CD8-positive, alpha-beta memory T cell (primary cell): ENCODE measurements at regions of chr17 and their contacts with region 1.

Region 1: GRCh38 chr17:49191917-49192741 is 18.2 kb downstream of the GNGT2 start:
- DNase-seq: peak; percentile 79 to 95 (median 89)
- H3K4me3 ChIP-seq: peak overlapping the region; percentile 94
- H3K4me3 Mint-ChIP-seq: peak overlapping the region; percentile 84 to 97 (median 91)
- H3K27ac ChIP-seq: peak overlapping the region; percentile 78
- H3K27ac Mint-ChIP-seq: peak overlapping the region; percentile 88 to 99 (median 96)
- H3K4me1 ChIP-seq: peaks cover 4% of the 10 kb centered on the region
- H3K4me1 Mint-ChIP-seq: peaks cover 23 to 43% (median 40%) of the 10 kb centered on the region in 3 donors
- H3K27me3 ChIP-seq: no peaks in the 10 kb centered on the region
- H3K27me3 Mint-ChIP-seq: peaks cover 0 to 12% of the 10 kb centered on the region in 2 donors

Region 2: GRCh38 chr17:49076573-49077384 is 115.3 kb before region 1 on chr17:
- CTCF ChIA-PET with region 1: no interaction called
- POLR2A ChIA-PET with region 1: no interaction called
- DNase-seq: no peak
- H3K4me3 ChIP-seq: no peak overlapping the region
- H3K4me3 Mint-ChIP-seq: no peak overlapping the region
- H3K27ac ChIP-seq: no peak overlapping the region
- H3K27ac Mint-ChIP-seq: no peak overlapping the region
- H3K4me1 ChIP-seq: no peaks in the 10 kb centered on the region
- H3K4me1 Mint-ChIP-seq: no peaks in the 10 kb centered on the region
- H3K27me3 ChIP-seq: no peaks in the 10 kb centered on the region
- H3K27me3 Mint-ChIP-seq: peaks cover 15 to 45% of the 10 kb centered on the region in 2 donors

Region 3: GRCh38 chr17:49210158-49211029 is 18.3 kb after region 1 on chr17 and contains the starts of genes ABI3 and GNGT2:
- CTCF ChIA-PET with region 1: interaction called, 133 read pairs
- POLR2A ChIA-PET with region 1: interaction called, 22 read pairs
- DNase-seq: peak; percentile 47 to 78 (median 70)
- H3K4me3 ChIP-seq: peak within 1 kb of the TSS; percentile 69
- H3K4me3 Mint-ChIP-seq: peak within 1 kb of the TSS; percentile 81 to 99 (median 98)
- H3K27ac ChIP-seq: peak within 1 kb of the TSS; percentile 57
- H3K27ac Mint-ChIP-seq: peak within 1 kb of the TSS; percentile 88 to 97 (median 94)
- H3K4me1 ChIP-seq: peaks cover 71% of the 10 kb centered on the region
- H3K4me1 Mint-ChIP-seq: peaks cover 67 to 79% (median 77%) of the 10 kb centered on the region in 3 donors
- H3K27me3 ChIP-seq: no peaks in the 10 kb centered on the region
- H3K27me3 Mint-ChIP-seq: no peaks in the 10 kb centered on the region
- total RNA-seq, gene ABI3: 46.4 to 48.5 TPM
- total RNA-seq, gene GNGT2: 24.0 to 26.5 TPM

Region 4: GRCh38 chr17:49217651-49218413 is 25.7 kb after region 1 on chr17:
- CTCF ChIA-PET with region 1: interaction called, 133 read pairs
- POLR2A ChIA-PET with region 1: interaction called, 35 read pairs
- DNase-seq: peak; percentile 62 to 92 (median 90)
- H3K4me3 ChIP-seq: peak overlapping the region; percentile 49
- H3K4me3 Mint-ChIP-seq: peak overlapping the region; percentile 67 to 88 (median 83)
- H3K27ac ChIP-seq: peak overlapping the region; percentile 59
- H3K27ac Mint-ChIP-seq: peak overlapping the region; percentile 94 to 100 (median 98)
- H3K4me1 ChIP-seq: peaks cover 77% of the 10 kb centered on the region
- H3K4me1 Mint-ChIP-seq: peaks cover 66 to 85% (median 69%) of the 10 kb centered on the region in 3 donors
- H3K27me3 ChIP-seq: no peaks in the 10 kb centered on the region
- H3K27me3 Mint-ChIP-seq: no peaks in the 10 kb centered on the region

Region 5: DNA sequence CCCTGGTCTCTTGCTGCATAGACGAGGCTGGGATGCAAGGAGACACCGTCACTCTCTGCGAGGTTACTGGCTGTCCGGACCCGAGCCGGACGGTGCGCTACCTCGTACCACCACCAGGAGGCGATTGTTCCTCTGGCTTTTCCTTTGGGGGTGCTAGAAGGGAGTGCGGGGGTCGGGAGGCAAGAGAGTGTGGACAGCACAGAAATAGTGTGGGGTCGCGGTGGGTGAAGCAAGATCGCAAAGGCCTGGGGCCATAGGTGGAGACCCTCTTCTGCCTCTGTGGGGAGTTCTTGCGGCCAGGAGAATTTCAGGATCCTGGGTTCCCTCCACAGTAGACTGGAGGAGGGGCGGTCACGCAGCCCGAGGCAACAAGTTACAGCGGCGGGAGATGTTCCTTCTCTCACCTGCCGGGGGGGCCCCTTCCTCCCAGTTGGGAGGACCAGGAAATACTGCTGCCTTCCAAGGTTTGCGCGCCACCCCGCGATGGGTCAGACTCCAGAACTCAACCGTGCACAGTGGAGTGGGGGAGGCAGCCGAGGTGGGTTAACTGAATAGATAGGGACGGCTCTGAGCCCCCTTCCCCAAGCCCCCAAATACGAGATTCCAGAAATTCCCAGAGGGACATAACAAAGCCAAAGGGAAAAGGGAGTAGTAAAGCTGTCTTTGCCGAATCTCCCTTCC is 31.5 kb after region 1 on chr17:
- CTCF ChIA-PET with region 1: interaction called, 173 read pairs
- POLR2A ChIA-PET with region 1: interaction called, 35 read pairs
- DNase-seq: peak; percentile 50 to 75 (median 60)
- H3K4me3 ChIP-seq: peak overlapping the region; percentile 56
- H3K4me3 Mint-ChIP-seq: peak overlapping the region; percentile 81 to 91 (median 83)
- H3K27ac ChIP-seq: no peak overlapping the region
- H3K27ac Mint-ChIP-seq: peak overlapping the region; percentile 43 to 89 (median 82)
- H3K4me1 ChIP-seq: peaks cover 56% of the 10 kb centered on the region
- H3K4me1 Mint-ChIP-seq: peaks cover 36 to 74% (median 41%) of the 10 kb centered on the region in 3 donors
- H3K27me3 ChIP-seq: no peaks in the 10 kb centered on the region
- H3K27me3 Mint-ChIP-seq: no peaks in the 10 kb centered on the region

Region 6: DNA sequence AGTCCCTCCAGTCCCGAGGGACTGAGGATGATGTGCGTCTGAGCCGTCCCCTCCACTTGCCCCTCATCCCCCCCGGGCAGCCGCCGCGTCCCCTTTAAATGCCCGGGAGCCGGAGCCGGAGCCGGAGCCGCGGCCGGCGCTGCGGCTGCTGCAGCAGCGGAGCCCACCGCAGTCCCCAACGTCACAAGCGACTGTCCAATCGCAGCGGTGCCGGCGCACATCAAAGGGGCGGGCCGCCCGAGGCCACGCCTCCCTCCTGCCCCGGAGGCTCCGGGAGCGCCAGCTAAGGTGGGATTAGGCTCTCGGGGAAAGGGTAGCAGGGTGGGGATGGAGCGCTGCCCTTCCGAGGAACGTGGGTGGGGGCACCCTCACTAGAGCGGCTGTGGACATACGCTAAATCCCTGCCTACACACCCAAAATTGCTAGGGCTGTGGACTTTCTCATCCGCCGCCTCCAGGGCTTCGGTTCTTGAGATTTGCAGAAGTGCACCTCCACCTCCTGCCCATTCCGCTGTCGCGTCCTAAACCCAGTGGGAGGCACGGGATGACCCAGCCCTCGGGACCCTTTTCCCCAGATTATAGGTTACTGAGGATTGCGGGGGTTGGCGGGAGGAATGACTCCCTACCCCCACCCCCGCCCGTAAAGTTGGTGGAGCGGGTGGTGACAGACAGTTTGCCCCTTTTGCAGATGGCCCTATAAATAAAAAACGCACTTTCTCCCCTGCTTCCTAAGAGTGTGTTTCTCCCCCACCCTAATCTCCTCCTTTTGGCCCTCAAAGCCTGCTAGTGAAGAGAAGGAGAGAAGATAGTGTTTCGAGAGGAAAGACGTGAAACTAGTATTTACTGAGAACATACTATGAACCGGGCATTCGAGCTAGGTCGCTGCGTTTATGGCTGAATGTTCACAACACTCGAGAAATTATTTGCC is 38.8 kb after region 1 on chr17 and contains the start of gene PHOSPHO1:
- CTCF ChIA-PET with region 1: interaction called, 173 read pairs
- POLR2A ChIA-PET with region 1: interaction called, 22 read pairs
- DNase-seq: peak; percentile 85 to 93 (median 85)
- H3K4me3 ChIP-seq: peak within 1 kb of the TSS; percentile 91
- H3K4me3 Mint-ChIP-seq: peak within 1 kb of the TSS; percentile 72 to 95 (median 85)
- H3K27ac ChIP-seq: no peak within 1 kb of the TSS
- H3K27ac Mint-ChIP-seq: peak within 1 kb of the TSS in 7 of 8 donors; percentile 61 to 96 (median 78)
- H3K4me1 ChIP-seq: peaks cover 20% of the 10 kb centered on the region
- H3K4me1 Mint-ChIP-seq: peaks cover 12 to 41% (median 17%) of the 10 kb centered on the region in 3 donors
- H3K27me3 ChIP-seq: no peaks in the 10 kb centered on the region
- H3K27me3 Mint-ChIP-seq: peaks cover 6 to 9% of the 10 kb centered on the region in 2 donors
- total RNA-seq, gene PHOSPHO1: not detected